GM10248 (cell line): ENCODE measurements at regions of chr12 and their contacts with region 1.

Region 1: GRCh38 chr12:39383114-39383513 is 59.8 kb downstream of the KIF21A start:
- DNase-seq: no peak
- CTCF ChIP-seq: no peak

Region 2: DNA sequence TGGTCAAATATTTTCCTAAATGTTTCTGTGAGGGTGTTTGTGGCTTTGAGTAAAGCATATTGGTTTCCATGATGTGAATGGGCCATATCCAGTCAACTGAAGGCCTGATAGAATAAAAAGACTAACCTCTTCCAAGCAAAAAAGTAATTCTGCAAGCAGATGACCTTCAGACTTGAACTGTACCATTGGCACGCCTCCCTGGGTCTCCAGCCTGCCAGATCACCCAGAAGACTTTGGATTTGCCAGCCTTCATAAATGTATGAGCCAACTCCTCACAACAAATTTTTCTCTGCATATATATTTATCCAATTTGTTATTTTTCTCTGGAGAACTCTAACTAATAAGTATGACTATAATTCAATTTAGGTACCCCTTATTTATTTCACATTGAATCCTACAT is 130.5 kb before region 1 on chr12:
- CTCF ChIA-PET with region 1: no interaction called
- POLR2A ChIA-PET with region 1: no interaction called
- DNase-seq: no peak
- CTCF ChIP-seq: no peak

Region 3: GRCh38 chr12:39372929-39373328 is 10.2 kb before region 1 on chr12:
- CTCF ChIA-PET with region 1: interaction called, 19 read pairs
- POLR2A ChIA-PET with region 1: no interaction called
- DNase-seq: no peak
- CTCF ChIP-seq: no peak

Region 4: DNA sequence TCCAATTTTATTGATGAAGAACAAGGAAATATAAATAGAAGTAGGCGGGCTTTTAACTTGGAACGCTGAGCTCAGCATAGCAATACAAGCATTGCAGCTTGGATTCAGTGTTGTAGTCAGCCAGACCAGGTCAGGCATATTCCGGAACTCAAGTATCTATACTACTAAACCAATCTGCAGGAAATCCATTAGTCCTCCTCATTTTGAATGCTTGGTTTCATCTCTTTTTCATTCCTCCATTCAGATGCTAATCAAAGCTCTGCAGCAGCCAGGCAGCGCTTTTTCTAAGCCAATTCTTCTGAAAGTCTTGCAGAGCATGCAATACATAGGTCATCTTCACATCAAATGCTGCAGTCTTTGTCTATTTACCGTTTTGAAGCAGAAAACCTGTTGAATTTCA is 10.8 kb after region 1 on chr12:
- CTCF ChIA-PET with region 1: interaction called, 10 read pairs
- POLR2A ChIA-PET with region 1: no interaction called
- DNase-seq: no peak
- CTCF ChIP-seq: no peak